ENCODE measurements at regions of chr15 and their contacts with region 1.

Region 1: DNA sequence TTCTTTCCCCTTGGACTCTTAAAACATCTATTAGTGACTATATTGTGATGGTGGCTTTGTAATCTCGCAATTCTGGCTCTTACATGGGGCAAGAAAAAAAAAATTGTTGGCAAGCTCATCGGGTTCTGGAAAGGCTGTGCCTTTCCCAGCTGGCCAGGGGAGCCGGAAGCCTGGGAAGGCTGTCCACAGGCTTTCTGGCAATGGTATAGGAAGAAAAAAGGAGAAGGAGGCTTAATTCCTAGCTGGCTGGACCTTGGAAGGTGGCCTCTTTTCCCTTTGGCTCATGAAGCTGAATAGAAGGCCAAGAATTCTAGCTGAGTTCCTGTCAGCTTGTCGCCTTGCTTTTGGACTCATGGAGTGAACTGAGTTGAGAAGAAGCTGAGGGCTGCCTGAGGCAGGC is 243.5 kb upstream of the SEMA6D start:
- DNase-seq: peak; percentile 91
- H3K4me3 ChIP-seq: no peak overlapping the region
- H3K27ac ChIP-seq: no peak overlapping the region
- H3K4me1 ChIP-seq: peaks cover 10% of the 10 kb centered on the region
- H3K27me3 ChIP-seq: no peaks in the 10 kb centered on the region
- CTCF ChIP-seq: no peak
- POLR2A ChIP-seq: no peak

Region 2: DNA sequence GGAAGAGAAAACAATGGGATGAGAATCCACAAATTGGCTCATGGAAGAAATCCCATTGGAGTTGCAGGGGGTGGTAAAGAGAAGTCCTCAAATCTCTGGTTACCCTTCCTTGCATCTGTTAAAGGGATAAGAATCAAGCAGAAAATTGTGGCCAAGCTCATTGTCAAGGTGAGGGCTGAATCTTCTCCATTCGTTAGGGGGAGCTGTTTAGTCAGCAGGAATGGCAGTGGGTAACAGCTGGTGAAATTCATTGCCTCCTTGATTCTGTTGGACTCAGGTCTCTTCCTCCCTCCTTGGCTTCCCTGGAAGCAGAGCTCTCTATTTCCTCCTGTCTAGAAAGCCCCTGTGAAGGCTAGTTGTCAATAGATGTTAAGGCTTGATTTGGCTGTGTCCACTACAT is 99.6 kb before region 1 on chr15:
- CTCF ChIA-PET with region 1: interaction called, 22 read pairs
- POLR2A ChIA-PET with region 1: no interaction called
- dilution Hi-C with region 1: no loop called
- intact Hi-C with region 1: loop called (anchors 1 kb)
- DNase-seq: peak; percentile 52
- H3K4me3 ChIP-seq: no peak overlapping the region
- H3K27ac ChIP-seq: no peak overlapping the region
- H3K4me1 ChIP-seq: no peaks in the 10 kb centered on the region
- H3K27me3 ChIP-seq: no peaks in the 10 kb centered on the region
- CTCF ChIP-seq: peak; percentile 36 to 49
- POLR2A ChIP-seq: no peak

Region 3: DNA sequence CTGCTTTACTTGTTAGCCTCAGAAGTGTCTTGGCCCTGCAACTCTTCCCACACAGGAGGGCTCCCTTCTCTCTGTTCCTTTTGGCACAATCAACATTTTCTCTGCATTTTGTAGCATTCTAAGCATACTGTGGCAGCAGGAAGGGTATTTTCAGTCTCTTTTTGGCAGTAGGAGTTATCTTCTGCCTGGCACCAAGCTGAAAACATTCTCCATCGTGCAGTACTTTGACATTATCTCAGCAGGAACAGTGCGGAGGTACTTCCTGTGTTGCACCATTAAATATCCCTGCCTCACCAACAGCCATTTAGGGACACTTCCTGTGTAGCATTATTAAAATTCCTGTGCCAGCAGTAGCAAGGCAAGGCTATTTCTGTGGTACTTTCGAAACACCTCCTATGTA is 10.2 kb after region 1 on chr15:
- CTCF ChIA-PET with region 1: interaction called, 14 read pairs
- POLR2A ChIA-PET with region 1: no interaction called
- dilution Hi-C with region 1: no loop called
- intact Hi-C with region 1: no loop called
- DNase-seq: peak; percentile 35
- H3K4me3 ChIP-seq: no peak overlapping the region
- H3K27ac ChIP-seq: no peak overlapping the region
- H3K4me1 ChIP-seq: peaks cover 3% of the 10 kb centered on the region
- H3K27me3 ChIP-seq: no peaks in the 10 kb centered on the region
- CTCF ChIP-seq: no peak
- POLR2A ChIP-seq: no peak

Region 4: DNA sequence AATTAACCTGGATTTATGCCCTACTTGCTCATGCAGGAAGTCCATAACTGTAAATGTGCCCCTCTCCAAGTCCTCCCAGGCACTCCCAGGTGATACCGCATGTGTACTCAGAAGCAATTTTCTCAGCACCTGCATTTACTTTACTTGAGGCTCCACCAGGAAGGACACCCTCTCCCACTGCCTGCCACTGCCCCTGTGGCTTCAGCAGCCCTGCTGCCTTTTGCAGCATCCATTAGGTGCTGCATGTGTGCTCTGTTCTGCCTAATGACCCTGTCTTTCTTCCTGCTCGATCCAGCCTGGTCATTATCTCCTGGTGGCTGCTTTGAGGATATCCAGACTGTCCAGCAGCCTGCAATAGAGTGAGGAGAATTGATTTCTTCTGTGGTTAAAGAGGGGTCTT is 135.9 kb after region 1 on chr15:
- CTCF ChIA-PET with region 1: no interaction called
- POLR2A ChIA-PET with region 1: no interaction called
- dilution Hi-C with region 1: no loop called
- intact Hi-C with region 1: loop called (anchors 5 kb)
- DNase-seq: no peak
- H3K4me3 ChIP-seq: no peak overlapping the region
- H3K27ac ChIP-seq: no peak overlapping the region
- H3K4me1 ChIP-seq: no peaks in the 10 kb centered on the region
- H3K27me3 ChIP-seq: no peaks in the 10 kb centered on the region
- CTCF ChIP-seq: no peak
- POLR2A ChIP-seq: no peak

Region 5: DNA sequence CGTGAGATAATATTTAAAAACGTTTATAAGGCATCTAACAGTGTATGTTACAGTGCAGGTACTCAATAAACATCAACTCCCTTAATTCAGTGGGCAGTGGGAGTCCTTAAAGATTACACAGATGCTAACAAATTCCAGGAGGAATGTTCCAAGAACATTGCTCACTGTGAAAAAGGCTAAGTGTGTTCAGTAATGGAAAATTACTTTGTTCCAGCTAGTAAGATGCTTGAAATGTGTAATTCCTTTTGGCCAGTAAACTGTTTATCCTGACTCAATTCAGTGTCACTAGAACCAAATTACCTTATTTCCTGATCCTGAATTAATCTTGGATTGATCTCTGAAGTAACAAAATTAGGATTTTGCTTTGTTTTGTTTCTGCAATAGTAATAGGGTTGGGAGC is 189.3 kb after region 1 on chr15:
- CTCF ChIA-PET with region 1: no interaction called
- POLR2A ChIA-PET with region 1: no interaction called
- dilution Hi-C with region 1: no loop called
- intact Hi-C with region 1: loop called (anchors 1 kb)
- DNase-seq: peak; percentile 21
- H3K4me3 ChIP-seq: no peak overlapping the region
- H3K27ac ChIP-seq: no peak overlapping the region
- H3K4me1 ChIP-seq: peaks cover 28% of the 10 kb centered on the region
- H3K27me3 ChIP-seq: no peaks in the 10 kb centered on the region
- CTCF ChIP-seq: no peak
- POLR2A ChIP-seq: no peak

Region 6: GRCh38 chr15:47711654-47712053 is 237.8 kb after region 1 on chr15:
- CTCF ChIA-PET with region 1: interaction called, 31 read pairs
- POLR2A ChIA-PET with region 1: no interaction called
- dilution Hi-C with region 1: no loop called
- intact Hi-C with region 1: no loop called
- DNase-seq: peak; percentile 26
- H3K4me3 ChIP-seq: no peak overlapping the region
- H3K27ac ChIP-seq: no peak overlapping the region
- H3K4me1 ChIP-seq: peaks cover 17% of the 10 kb centered on the region
- H3K27me3 ChIP-seq: no peaks in the 10 kb centered on the region
- CTCF ChIP-seq: peak; percentile 24 to 39
- POLR2A ChIP-seq: no peak

Region 7: GRCh38 chr15:47839233-47839825 is 365.5 kb after region 1 on chr15:
- CTCF ChIA-PET with region 1: no interaction called
- POLR2A ChIA-PET with region 1: no interaction called
- dilution Hi-C with region 1: no loop called
- intact Hi-C with region 1: no loop called
- DNase-seq: no peak
- H3K4me3 ChIP-seq: no peak overlapping the region
- H3K27ac ChIP-seq: no peak overlapping the region
- H3K4me1 ChIP-seq: no peaks in the 10 kb centered on the region
- H3K27me3 ChIP-seq: peaks cover 0 to 3% of the 10 kb centered on the region in 2 experiments
- CTCF ChIP-seq: no peak
- POLR2A ChIP-seq: no peak

Region 8: DNA sequence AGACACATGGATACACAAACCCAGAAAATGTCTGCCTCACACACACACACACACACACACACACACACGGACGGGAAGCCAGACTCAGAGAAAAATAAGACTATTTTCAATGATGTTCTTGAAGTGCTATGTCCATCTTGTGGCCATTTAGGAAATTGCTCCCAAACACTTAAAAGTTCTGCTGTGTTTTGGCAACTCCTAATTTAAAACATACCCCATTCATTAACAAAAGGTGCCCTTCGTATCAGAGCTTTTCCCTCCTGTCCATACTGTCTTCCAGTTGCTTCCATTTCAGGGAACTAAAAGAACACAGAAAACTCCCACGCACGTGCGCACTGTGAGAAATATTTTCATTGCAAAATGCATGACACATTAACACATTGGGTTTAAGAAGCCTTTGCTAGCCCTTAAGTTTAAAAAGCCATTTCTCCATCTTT is 776.8 kb after region 1 on chr15:
- CTCF ChIA-PET with region 1: no interaction called
- POLR2A ChIA-PET with region 1: no interaction called
- dilution Hi-C with region 1: no loop called
- intact Hi-C with region 1: loop called (anchors 1 kb)
- DNase-seq: peak; percentile 71
- H3K4me3 ChIP-seq: no peak overlapping the region
- H3K27ac ChIP-seq: no peak overlapping the region
- H3K4me1 ChIP-seq: no peaks in the 10 kb centered on the region
- H3K27me3 ChIP-seq: no peaks in the 10 kb centered on the region
- CTCF ChIP-seq: peak; percentile 57 to 61
- POLR2A ChIP-seq: no peak